Activated T-helper 2 cell treated with anti-CD3 and anti-CD28 coated beads, Interferon-gamma antibody, Interleukin-2, Interleukin-4, amounts not matched to agents 10 μg/mL and 5 μg/mL and 100 μg/mL, durations not matched to agents 14 hours and 24 hours and 36 hours (primary cell): ENCODE measurements at regions of chr7 and their contacts with region 1.

Region 1: GRCh38 chr7:92691578-92691977 is 101.4 kb upstream of the FAM133B start:
- DNase-seq: no peak
- H3K4me3 Mint-ChIP-seq: no peak overlapping the region
- H3K27ac Mint-ChIP-seq: peak overlapping the region; percentile 64
- H3K4me1 Mint-ChIP-seq: peaks cover 56% of the 10 kb centered on the region
- H3K27me3 Mint-ChIP-seq: no peaks in the 10 kb centered on the region

Region 2: GRCh38 chr7:92708111-92709042 is 16.8 kb after region 1 on chr7:
- intact Hi-C with region 1: loop called (anchors 2 kb)
- DNase-seq: no peak
- H3K4me3 Mint-ChIP-seq: no peak overlapping the region
- H3K27ac Mint-ChIP-seq: peak overlapping the region; percentile 64
- H3K4me1 Mint-ChIP-seq: peaks cover 43% of the 10 kb centered on the region
- H3K27me3 Mint-ChIP-seq: no peaks in the 10 kb centered on the region

Region 3: GRCh38 chr7:92720604-92721350 is 29.2 kb after region 1 on chr7:
- intact Hi-C with region 1: no loop called
- DNase-seq: no peak
- H3K4me3 Mint-ChIP-seq: no peak overlapping the region
- H3K27ac Mint-ChIP-seq: peak overlapping the region; percentile 42
- H3K4me1 Mint-ChIP-seq: peaks cover 71% of the 10 kb centered on the region
- H3K27me3 Mint-ChIP-seq: no peaks in the 10 kb centered on the region

Region 4: DNA sequence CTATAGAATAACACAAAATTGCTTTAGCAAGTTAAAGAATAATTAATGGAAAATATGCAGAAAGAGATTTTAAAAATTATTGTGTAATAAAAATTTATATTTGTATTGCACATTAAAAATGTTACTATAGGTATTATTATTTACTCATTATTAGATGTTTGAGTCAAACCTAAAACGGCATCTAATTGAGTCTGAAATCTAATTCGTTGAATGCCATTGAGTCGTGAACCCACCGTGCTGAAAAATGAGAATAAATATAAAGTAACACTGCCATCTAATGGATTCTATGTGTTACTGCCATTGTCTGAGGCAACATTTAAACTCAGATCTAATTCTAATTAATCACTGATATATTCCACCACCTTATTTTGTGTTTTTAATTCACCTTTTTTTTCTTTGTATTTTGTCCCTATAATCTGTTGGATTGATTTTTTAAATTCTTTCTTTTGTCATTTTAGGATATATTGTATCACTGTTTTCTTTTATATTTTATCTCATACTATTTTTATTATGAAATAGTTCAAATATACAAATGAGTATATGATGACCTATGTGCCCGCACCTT is 364.0 kb after region 1 on chr7:
- intact Hi-C with region 1: loop called (anchors 2 kb)
- DNase-seq: no peak
- H3K4me3 Mint-ChIP-seq: no peak overlapping the region
- H3K27ac Mint-ChIP-seq: no peak overlapping the region
- H3K4me1 Mint-ChIP-seq: peaks cover 21% of the 10 kb centered on the region
- H3K27me3 Mint-ChIP-seq: no peaks in the 10 kb centered on the region